Breast epithelium (tissue), 4 donors: ENCODE measurements at regions of chr11 and their contacts with region 1.

Region 1: GRCh38 chr11:131168839-131169713 is 201.3 kb upstream of the NTM start:
- DNase-seq: no peak
- H3K4me3 ChIP-seq: no peak overlapping the region
- H3K27ac ChIP-seq: no peak overlapping the region
- H3K4me1 ChIP-seq: no peaks in the 10 kb centered on the region
- H3K27me3 ChIP-seq: no peaks in the 10 kb centered on the region
- CTCF ChIP-seq: no peak
- POLR2A ChIP-seq: no peak

Region 2: DNA sequence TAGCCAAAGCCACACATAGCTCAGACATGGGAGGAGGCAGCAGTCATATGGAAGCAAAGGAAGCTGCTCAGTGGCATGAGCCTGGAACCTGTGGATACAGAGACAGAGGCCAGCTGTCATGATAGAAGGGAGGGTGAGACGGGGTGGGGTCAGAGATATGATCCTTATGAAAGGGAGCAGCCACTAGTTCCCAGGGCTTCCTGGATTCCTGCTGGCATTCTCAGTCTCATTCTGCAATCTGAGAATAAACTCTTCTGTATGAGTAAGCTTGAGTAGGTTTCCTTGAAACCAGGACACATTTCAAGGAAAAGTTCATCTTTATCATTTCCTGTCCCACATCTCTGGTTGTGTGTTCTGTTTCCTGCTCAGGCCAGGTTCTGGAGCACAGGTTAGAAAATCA is 32.6 kb before region 1 on chr11:
- intact Hi-C with region 1: loop called (anchors 2 kb)
- DNase-seq: no peak
- H3K4me3 ChIP-seq: no peak overlapping the region
- H3K27ac ChIP-seq: no peak overlapping the region
- H3K4me1 ChIP-seq: no peaks in the 10 kb centered on the region
- H3K27me3 ChIP-seq: no peaks in the 10 kb centered on the region
- CTCF ChIP-seq: no peak
- POLR2A ChIP-seq: no peak

Region 3: DNA sequence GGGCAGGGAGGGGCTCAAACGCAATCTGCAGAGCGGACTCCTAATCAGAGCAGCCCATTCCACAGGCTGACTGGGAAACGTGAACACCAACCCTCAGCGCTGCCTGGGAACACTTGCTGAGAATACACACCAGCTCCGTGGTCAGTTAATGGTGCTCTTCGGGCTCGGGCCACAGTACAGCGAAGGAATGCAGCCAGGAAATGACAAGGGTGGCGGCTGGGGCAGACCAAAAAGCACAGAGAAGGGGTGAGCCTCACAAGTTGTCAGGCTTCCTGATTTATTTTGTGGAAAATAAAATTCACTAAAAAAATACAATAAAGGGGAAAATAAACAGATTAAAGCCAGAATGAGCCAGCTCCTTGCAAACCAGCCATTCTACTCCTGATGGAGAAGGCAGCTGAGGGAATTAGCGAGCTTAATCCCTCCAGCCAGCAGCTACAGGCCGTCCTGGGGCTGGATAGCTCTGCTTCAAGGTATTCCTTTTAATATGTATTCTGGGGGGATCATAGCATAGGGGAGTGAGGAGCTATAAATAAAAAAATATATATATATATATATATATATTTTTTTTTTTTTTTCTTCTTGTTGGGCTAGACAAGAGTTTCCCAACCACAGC is 35.8 kb after region 1 on chr11:
- intact Hi-C with region 1: no loop called
- DNase-seq: no peak
- H3K4me3 ChIP-seq: no peak overlapping the region
- H3K27ac ChIP-seq: no peak overlapping the region
- H3K4me1 ChIP-seq: no peaks in the 10 kb centered on the region
- H3K27me3 ChIP-seq: peaks cover 0 to 5% of the 10 kb centered on the region in 2 donors
- CTCF ChIP-seq: no peak
- POLR2A ChIP-seq: no peak

Region 4: DNA sequence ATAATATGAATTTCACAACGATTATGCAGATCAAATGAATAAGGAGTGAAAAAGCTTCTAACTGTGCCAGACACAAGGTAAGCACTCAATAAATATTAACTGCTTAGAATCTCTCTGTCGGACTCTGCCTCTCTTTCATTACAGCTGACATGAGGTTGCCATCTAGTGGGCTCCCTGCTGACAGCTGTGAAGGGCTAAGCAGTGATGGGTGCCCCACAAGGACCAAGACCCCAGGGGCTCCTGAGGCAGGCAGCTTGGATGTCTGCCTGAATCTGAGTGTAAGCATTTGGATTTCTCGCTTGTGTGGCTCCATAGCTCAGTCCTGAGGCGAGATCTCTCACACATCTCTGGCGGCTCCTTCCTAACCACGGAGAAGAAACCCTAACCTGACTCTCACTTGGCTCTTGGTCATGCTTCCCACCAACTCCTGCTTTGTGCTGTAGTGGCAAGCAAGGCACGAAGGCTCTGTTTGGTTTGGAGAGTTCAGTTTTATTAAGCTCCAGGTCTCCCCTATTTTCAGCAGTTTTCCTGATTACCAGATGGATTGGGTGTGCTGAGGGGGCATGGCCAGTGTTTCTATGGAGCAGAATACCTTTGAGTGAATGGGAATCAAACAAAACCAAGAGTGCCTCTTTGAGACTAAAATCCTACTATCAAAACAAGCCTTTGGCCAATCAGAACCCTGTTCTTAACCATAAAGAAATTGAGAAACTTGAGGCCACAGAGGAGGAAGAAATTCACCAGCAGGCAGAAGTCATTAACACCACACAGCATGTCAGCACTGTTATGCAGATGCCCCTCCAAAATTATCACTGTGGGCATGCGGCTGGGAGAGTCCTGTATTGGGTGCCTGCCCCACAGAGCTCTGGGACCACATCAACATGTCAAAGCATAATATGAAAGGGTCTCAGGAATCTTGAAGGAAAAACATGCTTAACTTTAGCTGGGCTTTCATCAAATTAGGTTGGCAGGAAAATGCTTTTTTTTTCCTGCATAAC is 48.5 kb after region 1 on chr11:
- intact Hi-C with region 1: no loop called
- DNase-seq: no peak
- H3K4me3 ChIP-seq: no peak overlapping the region
- H3K27ac ChIP-seq: no peak overlapping the region
- H3K4me1 ChIP-seq: no peaks in the 10 kb centered on the region
- H3K27me3 ChIP-seq: no peaks in the 10 kb centered on the region
- CTCF ChIP-seq: no peak
- POLR2A ChIP-seq: no peak

Region 5: DNA sequence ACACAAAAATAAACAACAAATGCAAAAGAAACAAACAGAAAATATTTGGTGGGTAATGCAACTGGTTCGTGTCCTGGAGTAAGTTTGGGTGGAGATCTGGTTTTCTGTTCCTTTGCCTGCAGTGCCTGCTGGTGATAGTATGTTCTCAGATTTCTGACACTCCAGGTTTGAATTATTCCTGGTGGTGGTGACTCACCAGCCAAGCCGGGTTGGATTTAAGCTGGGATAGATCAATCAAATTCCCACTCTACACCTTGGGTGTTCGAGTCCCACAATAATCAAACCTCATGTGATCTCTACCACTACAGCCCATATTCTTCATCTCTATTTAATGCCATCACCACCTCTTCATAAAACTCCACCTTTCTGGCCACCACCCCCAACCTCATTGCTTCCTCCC is 623.2 kb after region 1 on chr11:
- intact Hi-C with region 1: no loop called
- DNase-seq: no peak
- H3K4me3 ChIP-seq: no peak overlapping the region
- H3K27ac ChIP-seq: no peak overlapping the region
- H3K4me1 ChIP-seq: no peaks in the 10 kb centered on the region
- H3K27me3 ChIP-seq: no peaks in the 10 kb centered on the region
- CTCF ChIP-seq: no peak
- POLR2A ChIP-seq: no peak